Mammary epithelial cell (primary cell): ENCODE measurements at regions of chr10 and their contacts with region 1.

Region 1: DNA sequence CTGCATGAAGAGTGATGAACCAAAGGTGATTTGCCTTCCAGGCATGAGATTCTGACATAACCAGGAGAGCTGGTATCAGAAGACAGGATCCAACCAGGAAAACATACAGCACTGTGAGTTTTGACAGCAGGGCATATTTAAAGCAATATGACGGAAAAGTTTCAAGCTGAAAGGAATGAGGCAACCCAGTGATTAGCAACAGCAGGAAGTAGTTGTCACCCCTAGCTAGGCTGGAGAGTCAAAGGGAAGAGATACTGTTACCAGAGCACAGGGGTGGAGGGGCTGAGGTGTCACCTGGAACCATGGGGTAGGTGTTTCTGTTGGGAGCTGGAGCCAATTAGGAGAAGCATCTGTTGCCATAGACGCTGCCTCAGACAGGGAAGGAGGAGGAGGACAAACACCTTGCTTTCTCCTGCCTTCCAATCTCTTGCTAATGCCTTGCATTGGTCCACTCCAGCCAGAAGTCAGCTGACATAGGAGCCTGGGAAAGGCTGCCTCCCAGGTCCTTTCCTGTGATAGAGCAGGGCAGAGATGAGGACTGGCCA is 125.3 kb upstream of the SORCS3 start:
- DNase-seq: no peak
- H3K4me3 ChIP-seq: no peak overlapping the region
- H3K27ac ChIP-seq: no peak overlapping the region
- H3K4me1 ChIP-seq: no peaks in the 10 kb centered on the region
- H3K27me3 ChIP-seq: peaks cover under 1% of the 10 kb centered on the region
- CTCF ChIP-seq: no peak

Region 2: DNA sequence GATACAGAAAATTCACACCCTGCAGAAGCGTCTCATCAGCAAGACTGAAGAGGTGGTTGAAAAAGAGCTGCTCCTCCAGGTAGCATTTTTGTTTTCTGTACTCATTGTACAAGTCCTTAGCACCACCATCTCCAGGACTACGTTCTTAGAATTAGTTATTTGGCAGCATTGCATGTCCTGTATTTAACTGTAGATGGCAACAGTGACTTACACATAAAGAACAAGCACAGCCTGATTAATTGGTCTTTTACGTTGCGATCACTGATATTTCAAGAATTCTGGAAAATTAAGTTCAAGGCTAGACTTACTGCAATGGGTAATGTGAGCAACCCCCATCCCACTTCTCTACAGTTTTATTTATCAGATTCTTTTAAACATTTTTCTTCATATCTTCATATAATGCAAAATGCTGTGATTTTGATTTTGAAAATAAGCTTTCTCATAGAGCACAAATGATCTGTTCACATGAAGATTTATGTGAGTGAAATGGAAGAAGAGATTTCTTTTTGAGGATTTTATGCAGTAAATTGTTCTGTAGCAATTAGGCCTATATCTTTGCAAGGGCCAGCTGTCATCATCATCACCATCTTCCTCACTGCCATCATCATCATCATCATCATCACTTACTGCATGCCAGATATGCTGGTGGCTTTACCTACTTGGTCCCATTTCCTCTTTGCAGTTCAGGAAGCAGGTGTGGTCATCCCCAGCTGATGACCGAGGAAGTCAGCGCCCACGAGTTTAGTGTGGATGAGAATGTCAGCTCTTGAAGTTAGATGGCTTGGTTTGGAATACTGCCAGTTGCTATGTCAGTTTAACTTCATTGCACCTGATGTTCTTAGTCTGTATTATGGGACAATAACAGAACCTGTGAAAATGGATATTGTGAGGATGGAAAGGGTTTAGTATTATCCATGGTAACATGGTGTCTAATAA is 108.8 kb before region 1 on chr10:
- CTCF ChIA-PET with region 1: no interaction called
- dilution Hi-C with region 1: no loop called
- in situ Hi-C with region 1: no loop called
- intact Hi-C with region 1: no loop called
- DNase-seq: peak; percentile 27
- H3K4me3 ChIP-seq: no peak overlapping the region
- H3K27ac ChIP-seq: no peak overlapping the region
- H3K4me1 ChIP-seq: no peaks in the 10 kb centered on the region
- H3K27me3 ChIP-seq: no peaks in the 10 kb centered on the region
- CTCF ChIP-seq: peak; percentile 77 to 86

Region 3: DNA sequence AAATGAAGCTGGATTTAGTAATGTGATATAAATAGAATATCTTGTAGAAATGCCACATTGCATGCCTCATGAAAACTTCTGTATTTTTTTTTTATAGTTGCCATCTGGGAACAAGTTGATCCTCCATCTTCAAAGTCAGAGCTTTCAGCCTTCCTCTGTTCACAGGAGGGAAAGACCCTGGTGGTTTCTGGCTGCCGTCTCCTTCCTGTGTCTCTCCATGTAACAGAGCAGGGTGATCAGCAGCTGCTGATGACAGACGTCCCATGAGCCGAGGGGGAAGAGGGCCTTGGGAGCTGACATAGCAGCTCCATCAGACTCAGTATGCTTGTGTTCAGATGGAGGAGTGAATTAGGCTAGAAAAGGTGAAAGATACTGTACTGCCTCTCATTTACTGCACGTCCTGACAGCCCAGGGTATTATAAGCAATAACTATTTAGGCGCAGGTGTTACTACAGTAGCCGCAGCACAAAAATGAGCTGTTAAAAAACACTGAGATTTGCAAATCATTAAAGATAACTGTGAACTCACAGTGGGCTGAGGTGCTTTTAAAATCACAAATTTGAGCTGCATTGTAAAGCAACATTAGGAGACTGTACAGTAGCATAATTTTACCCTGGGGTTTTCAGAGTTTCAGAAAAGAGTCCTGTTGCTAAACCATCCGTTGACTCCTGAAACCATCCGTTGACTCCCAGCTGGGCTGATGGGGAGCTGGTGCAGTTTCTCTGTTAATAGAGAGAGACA is 58.8 kb before region 1 on chr10:
- CTCF ChIA-PET with region 1: no interaction called
- dilution Hi-C with region 1: loop called (anchors 5 kb)
- in situ Hi-C with region 1: no loop called
- intact Hi-C with region 1: no loop called
- DNase-seq: no peak
- H3K4me3 ChIP-seq: no peak overlapping the region
- H3K27ac ChIP-seq: no peak overlapping the region
- H3K4me1 ChIP-seq: peaks cover 8% of the 10 kb centered on the region
- H3K27me3 ChIP-seq: no peaks in the 10 kb centered on the region
- CTCF ChIP-seq: no peak